Spleen (tissue), 13 donors: ENCODE measurements at regions of chr7 and their contacts with region 1.

Region 1: GRCh38 chr7:120805636-120806388 is 52.1 kb downstream of the TSPAN12 start:
- DNase-seq: no peak
- H3K4me3 ChIP-seq: no peak overlapping the region
- H3K27ac ChIP-seq: no peak overlapping the region
- H3K4me1 ChIP-seq: peaks cover 0 to 16% (median 0%) of the 10 kb centered on the region in 6 donors
- H3K27me3 ChIP-seq: no peaks in the 10 kb centered on the region
- CTCF ChIP-seq: peak; percentile 30 to 76 (median 70)
- POLR2A ChIP-seq: no peak

Region 2: GRCh38 chr7:120709972-120710320 is 95.9 kb before region 1 on chr7:
- intact Hi-C with region 1: no loop called
- DNase-seq: no peak
- H3K4me3 ChIP-seq: no peak overlapping the region
- H3K27ac ChIP-seq: no peak overlapping the region
- H3K4me1 ChIP-seq: no peaks in the 10 kb centered on the region
- H3K27me3 ChIP-seq: no peaks in the 10 kb centered on the region
- CTCF ChIP-seq: no peak
- POLR2A ChIP-seq: no peak

Region 3: DNA sequence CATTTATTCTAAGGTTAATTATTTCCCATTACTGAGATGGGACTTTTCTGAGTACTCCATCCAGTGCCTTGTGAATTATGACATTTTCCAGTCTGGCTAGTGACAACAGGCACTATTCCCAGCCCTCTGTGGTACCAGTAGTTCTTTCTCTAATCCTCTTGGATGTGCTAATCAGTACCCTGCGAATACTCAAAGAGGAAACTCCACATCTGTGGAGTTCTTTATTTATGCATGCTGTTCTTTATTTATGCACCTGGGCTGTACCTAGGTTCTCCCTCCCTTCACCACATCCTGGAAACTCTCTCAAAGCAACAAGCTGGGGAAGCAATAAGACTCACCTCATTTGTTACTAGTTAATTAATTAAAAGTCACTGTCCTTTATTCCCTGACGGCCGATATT is 31.3 kb before region 1 on chr7:
- intact Hi-C with region 1: no loop called
- DNase-seq: no peak
- H3K4me3 ChIP-seq: no peak overlapping the region
- H3K27ac ChIP-seq: no peak overlapping the region
- H3K4me1 ChIP-seq: no peaks in the 10 kb centered on the region
- H3K27me3 ChIP-seq: no peaks in the 10 kb centered on the region
- CTCF ChIP-seq: no peak
- POLR2A ChIP-seq: no peak

Region 4: GRCh38 chr7:120857588-120858573 is 52.1 kb after region 1 on chr7 and contains the start of gene TSPAN12:
- intact Hi-C with region 1: loop called (anchors 5 kb)
- DNase-seq: peak; percentile 90
- H3K4me3 ChIP-seq: peak within 1 kb of the TSS; percentile 54 to 82 (median 58)
- H3K27ac ChIP-seq: peak within 1 kb of the TSS; percentile 51 to 91 (median 86)
- H3K4me1 ChIP-seq: peaks cover 0 to 30% (median 16%) of the 10 kb centered on the region in 6 donors
- H3K27me3 ChIP-seq: peaks cover 0 to 68% (median 17%) of the 10 kb centered on the region in 7 donors
- CTCF ChIP-seq: peak in 10 of 11 experiments; percentile 38 to 80 (median 70)
- POLR2A ChIP-seq: no peak
- total RNA-seq, gene TSPAN12: 28.8 to 61.2 (median 47.7) TPM

Region 5: GRCh38 chr7:120933475-120933874 is 127.7 kb after region 1 on chr7:
- intact Hi-C with region 1: loop called (anchors 10 kb)
- DNase-seq: no peak
- H3K4me3 ChIP-seq: no peak overlapping the region
- H3K27ac ChIP-seq: no peak overlapping the region
- H3K4me1 ChIP-seq: no peaks in the 10 kb centered on the region
- H3K27me3 ChIP-seq: peaks cover 0 to 7% (median 0%) of the 10 kb centered on the region in 7 donors
- CTCF ChIP-seq: no peak
- POLR2A ChIP-seq: no peak